CD4-positive, alpha-beta T cell (primary cell): ENCODE measurements at regions of chr2 and their contacts with region 1.

Region 1: DNA sequence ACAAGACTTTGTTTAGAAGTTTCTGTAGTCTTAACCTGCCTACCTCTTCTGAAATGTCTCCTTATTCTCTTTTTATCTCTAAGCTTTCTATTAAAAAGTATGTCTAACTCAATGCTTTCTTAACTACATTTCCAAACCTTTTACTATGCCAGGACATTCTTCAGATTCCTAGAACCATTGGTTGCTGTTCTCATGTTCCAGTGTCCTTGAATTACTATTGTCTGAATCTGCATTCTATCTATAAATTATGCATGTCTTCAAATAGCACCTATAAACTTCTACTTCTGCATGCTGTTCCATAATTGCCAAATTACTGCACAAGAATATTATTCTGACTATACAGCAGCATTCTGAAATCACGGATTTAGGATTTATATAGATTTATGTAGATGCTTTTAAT is 166.0 kb upstream of the VWC2L start:
- DNase-seq: no peak
- ATAC-seq: no peak
- H3K4me3 ChIP-seq: no peak overlapping the region
- H3K4me3 Mint-ChIP-seq: no peak overlapping the region
- H3K27ac ChIP-seq: no peak overlapping the region
- H3K27ac Mint-ChIP-seq: no peak overlapping the region
- H3K4me1 ChIP-seq: no peaks in the 10 kb centered on the region
- H3K4me1 Mint-ChIP-seq: no peaks in the 10 kb centered on the region
- H3K27me3 ChIP-seq: no peaks in the 10 kb centered on the region
- H3K27me3 Mint-ChIP-seq: no peaks in the 10 kb centered on the region
- CTCF ChIP-seq: no peak

Region 2: GRCh38 chr2:214038186-214038585 is 206.7 kb before region 1 on chr2:
- CTCF ChIA-PET with region 1: no interaction called
- POLR2A ChIA-PET with region 1: no interaction called
- intact Hi-C with region 1: no loop called
- DNase-seq: no peak
- ATAC-seq: no peak
- H3K4me3 ChIP-seq: no peak overlapping the region
- H3K4me3 Mint-ChIP-seq: no peak overlapping the region
- H3K27ac ChIP-seq: no peak overlapping the region
- H3K27ac Mint-ChIP-seq: no peak overlapping the region
- H3K4me1 ChIP-seq: no peaks in the 10 kb centered on the region
- H3K4me1 Mint-ChIP-seq: no peaks in the 10 kb centered on the region
- H3K27me3 ChIP-seq: no peaks in the 10 kb centered on the region
- H3K27me3 Mint-ChIP-seq: no peaks in the 10 kb centered on the region
- CTCF ChIP-seq: no peak

Region 3: GRCh38 chr2:214774108-214774507 is 529.3 kb after region 1 on chr2:
- CTCF ChIA-PET with region 1: no interaction called
- POLR2A ChIA-PET with region 1: no interaction called
- intact Hi-C with region 1: loop called in 1 of 2 experiments (anchors 10 kb)
- DNase-seq: no peak
- ATAC-seq: no peak
- H3K4me3 ChIP-seq: no peak overlapping the region
- H3K4me3 Mint-ChIP-seq: no peak overlapping the region
- H3K27ac ChIP-seq: no peak overlapping the region
- H3K27ac Mint-ChIP-seq: no peak overlapping the region
- H3K4me1 ChIP-seq: no peaks in the 10 kb centered on the region
- H3K4me1 Mint-ChIP-seq: no peaks in the 10 kb centered on the region
- H3K27me3 ChIP-seq: no peaks in the 10 kb centered on the region
- H3K27me3 Mint-ChIP-seq: no peaks in the 10 kb centered on the region
- CTCF ChIP-seq: no peak